PC-9 (cell line): ENCODE measurements at regions of chr2 and their contacts with region 1.

Region 1: DNA sequence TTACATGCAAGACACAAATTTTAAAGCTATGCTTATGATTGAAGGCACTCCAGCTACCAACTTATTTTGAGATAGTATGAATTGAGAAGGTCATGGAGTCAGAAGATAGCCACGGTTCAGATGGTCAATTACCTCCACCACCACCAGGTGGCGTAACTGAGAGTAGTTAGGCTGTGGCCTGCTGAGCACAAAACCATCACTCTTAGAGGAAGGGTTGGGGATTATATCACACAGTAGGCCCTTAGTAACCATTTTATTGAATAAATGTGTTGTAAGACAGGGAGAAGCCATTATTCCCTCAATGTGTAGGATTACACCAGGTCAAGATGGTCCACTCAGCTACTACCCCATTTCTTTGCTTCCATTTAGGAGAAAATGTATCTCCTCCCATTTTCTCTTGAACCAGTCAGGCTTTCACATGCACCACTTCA is 18.8 kb downstream of the KLHL41 start:
- DNase-seq: peak in 1 of 2 experiments; percentile 40
- H3K4me3 ChIP-seq: no peak overlapping the region
- H3K27ac ChIP-seq: no peak overlapping the region
- H3K4me1 ChIP-seq: no peaks in the 10 kb centered on the region
- H3K27me3 ChIP-seq: no peaks in the 10 kb centered on the region
- CTCF ChIP-seq: peak; percentile 78

Region 2: GRCh38 chr2:169933124-169933711 is 404.9 kb after region 1 on chr2:
- CTCF ChIA-PET with region 1: no interaction called
- POLR2A ChIA-PET with region 1: no interaction called
- intact Hi-C with region 1: loop called (anchors 5 kb)
- DNase-seq: no peak
- H3K4me3 ChIP-seq: no peak overlapping the region
- H3K27ac ChIP-seq: no peak overlapping the region
- H3K4me1 ChIP-seq: no peaks in the 10 kb centered on the region
- H3K27me3 ChIP-seq: no peaks in the 10 kb centered on the region
- CTCF ChIP-seq: peak; percentile 72